K562 (cell line): ENCODE measurements at regions of chr5 and their contacts with region 1.

Region 1: DNA sequence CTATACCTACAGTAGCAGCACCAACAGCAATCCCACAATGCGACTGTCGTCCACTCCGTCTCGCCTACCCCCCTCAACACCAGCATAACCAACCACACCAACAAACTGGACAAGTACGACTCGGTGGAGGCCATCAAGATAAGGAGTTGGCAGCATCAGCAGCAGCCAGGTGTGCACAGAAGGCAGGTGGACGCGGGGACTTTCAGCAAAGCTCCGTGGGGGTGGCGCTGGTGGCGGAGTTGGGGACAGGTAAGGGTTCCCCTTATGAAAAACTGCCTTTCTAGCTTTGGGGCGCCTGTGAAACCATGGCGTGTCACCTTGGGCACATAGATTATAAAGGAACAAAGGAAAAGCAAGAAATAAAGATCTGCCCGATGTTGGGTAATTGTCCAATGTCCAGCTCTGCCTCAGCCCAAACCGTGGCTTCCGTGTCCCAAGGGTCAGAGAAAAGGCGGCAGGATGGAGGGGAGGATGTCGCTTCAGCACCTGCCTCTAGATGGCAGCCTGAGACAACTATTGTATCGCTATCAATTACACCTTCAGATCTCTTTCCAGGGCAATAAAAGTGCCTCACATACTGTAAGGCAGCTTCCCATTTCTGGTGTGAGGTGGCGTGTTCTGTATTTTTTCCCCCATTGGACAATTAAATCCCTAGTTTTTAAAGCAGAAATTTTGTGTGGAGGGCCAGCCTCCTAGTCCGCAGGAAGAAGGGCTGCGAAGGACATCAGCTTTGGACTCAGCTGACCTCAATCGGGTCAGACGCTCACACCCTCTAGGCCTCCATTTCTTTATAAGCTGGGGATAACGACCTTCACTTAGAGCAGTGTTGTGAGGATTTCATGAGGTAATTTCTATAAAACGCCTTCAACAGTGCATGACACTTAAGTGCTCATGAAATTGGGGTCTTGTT is 58.8 kb downstream of the MTRR start:
- DNase-seq: peak; percentile 76 to 77 (median 76)
- ATAC-seq: peak; percentile 97
- H3K4me3 ChIP-seq: no peak overlapping the region
- H3K27ac ChIP-seq: no peak overlapping the region
- H3K4me1 ChIP-seq: no peaks in the 10 kb centered on the region
- H3K27me3 ChIP-seq: peaks cover 0 to 4% of the 10 kb centered on the region in 2 experiments; a peak in 2 of 5 replicates
- CTCF ChIP-seq: peak; percentile 80 to 96 (median 94)
- EP300 ChIP-seq: no peak
- POLR2A ChIP-seq: no peak
- RAD21 ChIP-seq: peak; percentile 75 to 90

Region 2: GRCh38 chr5:7904170-7904569 is 23.6 kb before region 1 on chr5:
- CTCF ChIA-PET with region 1: no interaction called
- POLR2A ChIA-PET with region 1: no interaction called
- in situ Hi-C with region 1: no loop called
- intact Hi-C with region 1: no loop called
- DNase-seq: no peak
- ATAC-seq: peak; percentile 48; the same call in 2 of the 3 replicates
- H3K4me3 ChIP-seq: no peak overlapping the region
- H3K27ac ChIP-seq: no peak overlapping the region
- H3K4me1 ChIP-seq: no peaks in the 10 kb centered on the region
- H3K27me3 ChIP-seq: no peaks in the 10 kb centered on the region
- CTCF ChIP-seq: no peak
- EP300 ChIP-seq: no peak
- POLR2A ChIP-seq: no peak
- RAD21 ChIP-seq: no peak

Region 3: DNA sequence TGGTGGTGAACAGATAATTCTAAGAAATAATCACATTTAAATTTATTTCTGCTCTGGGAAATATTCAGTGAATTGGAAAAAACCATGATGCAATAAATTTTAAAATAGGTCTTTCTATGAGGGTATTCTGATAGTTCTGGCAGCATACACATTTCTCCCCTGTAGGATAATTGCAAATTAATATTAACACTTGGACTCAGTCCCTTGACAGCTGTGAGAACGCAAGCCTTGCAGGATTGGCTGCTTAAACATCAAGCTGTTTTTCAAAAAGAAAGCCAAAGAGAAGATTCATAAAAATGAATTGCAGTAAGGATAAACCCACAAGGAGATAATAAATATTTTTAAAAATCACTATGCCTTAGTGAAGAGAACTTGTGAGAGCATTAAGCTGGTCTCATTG is 121.2 kb after region 1 on chr5:
- CTCF ChIA-PET with region 1: no interaction called
- POLR2A ChIA-PET with region 1: no interaction called
- in situ Hi-C with region 1: no loop called
- intact Hi-C with region 1: loop called (anchors 5 kb)
- DNase-seq: no peak
- ATAC-seq: no peak
- H3K4me3 ChIP-seq: no peak overlapping the region
- H3K27ac ChIP-seq: no peak overlapping the region
- H3K4me1 ChIP-seq: peaks cover 0 to 3% of the 10 kb centered on the region in 2 experiments; a peak in 1 of 5 replicates
- H3K27me3 ChIP-seq: peaks cover 0 to 12% of the 10 kb centered on the region in 2 experiments; a peak in 3 of 5 replicates
- CTCF ChIP-seq: no peak
- EP300 ChIP-seq: no peak
- POLR2A ChIP-seq: no peak
- RAD21 ChIP-seq: no peak

Region 4: DNA sequence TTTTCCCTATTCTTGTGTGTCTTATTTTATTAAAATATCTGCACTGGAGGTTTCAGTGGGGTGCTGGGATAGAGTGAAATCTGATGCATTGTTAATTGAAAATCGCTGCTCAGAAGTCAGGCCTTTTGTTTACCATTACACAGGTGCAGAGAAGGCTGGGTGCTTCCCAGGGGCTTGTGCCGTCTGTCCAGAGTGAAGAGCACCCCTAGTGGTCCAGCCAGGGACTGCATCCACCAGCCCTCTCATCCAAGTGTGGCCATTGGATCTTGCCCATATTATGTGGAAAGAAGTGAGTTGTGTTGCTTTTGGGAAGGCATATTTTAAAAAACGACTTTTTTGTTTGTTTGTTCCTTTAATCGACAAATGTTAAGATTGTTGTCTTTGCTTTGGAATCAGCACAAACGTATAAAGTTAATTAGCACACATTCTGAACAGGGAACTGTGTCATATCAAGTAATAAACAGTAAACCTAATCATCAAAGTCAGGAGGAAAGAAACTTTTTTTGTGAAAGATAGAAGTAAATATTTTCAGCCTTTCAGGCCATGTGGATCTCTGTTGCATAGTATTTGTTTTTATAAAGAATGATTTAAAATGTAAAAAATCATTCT is 256.8 kb after region 1 on chr5:
- CTCF ChIA-PET with region 1: no interaction called
- POLR2A ChIA-PET with region 1: no interaction called
- in situ Hi-C with region 1: no loop called
- intact Hi-C with region 1: loop called (anchors 10 kb)
- DNase-seq: peak; percentile 59 to 76 (median 70)
- ATAC-seq: peak; percentile 98
- H3K4me3 ChIP-seq: no peak overlapping the region
- H3K27ac ChIP-seq: no peak overlapping the region
- H3K4me1 ChIP-seq: no peaks in the 10 kb centered on the region
- H3K27me3 ChIP-seq: no peaks in the 10 kb centered on the region
- CTCF ChIP-seq: peak; percentile 64 to 93 (median 80)
- EP300 ChIP-seq: no peak
- POLR2A ChIP-seq: no peak
- RAD21 ChIP-seq: peak in 1 of 2 experiments; percentile 35; a peak in 2 of 4 replicates

Region 5: GRCh38 chr5:9207817-9208418 is 1280.2 kb after region 1 on chr5:
- CTCF ChIA-PET with region 1: interaction called, 14 read pairs
- POLR2A ChIA-PET with region 1: no interaction called
- in situ Hi-C with region 1: loop called (anchors 10 kb)
- intact Hi-C with region 1: loop called (anchors 2 kb)
- DNase-seq: peak; percentile 18 to 68 (median 37)
- ATAC-seq: peak; percentile 89
- H3K4me3 ChIP-seq: no peak overlapping the region
- H3K27ac ChIP-seq: no peak overlapping the region
- H3K4me1 ChIP-seq: no peaks in the 10 kb centered on the region
- H3K27me3 ChIP-seq: no peaks in the 10 kb centered on the region
- CTCF ChIP-seq: peak; percentile 23 to 77 (median 25); a peak in 3 of 6 replicates
- EP300 ChIP-seq: no peak
- POLR2A ChIP-seq: no peak
- RAD21 ChIP-seq: peak; percentile 69 to 85

Region 6: GRCh38 chr5:9544502-9545135 is 1616.9 kb after region 1 on chr5:
- CTCF ChIA-PET with region 1: no interaction called
- POLR2A ChIA-PET with region 1: no interaction called
- in situ Hi-C with region 1: no loop called
- intact Hi-C with region 1: loop called (anchors 10 kb)
- DNase-seq: peak; percentile 65 to 77 (median 68)
- ATAC-seq: peak; percentile 88
- H3K4me3 ChIP-seq: no peak overlapping the region
- H3K27ac ChIP-seq: no peak overlapping the region
- H3K4me1 ChIP-seq: peaks cover 0 to 21% of the 10 kb centered on the region in 2 experiments; a peak in 2 of 5 replicates
- H3K27me3 ChIP-seq: peaks cover 0 to 4% of the 10 kb centered on the region in 2 experiments; a peak in 1 of 5 replicates
- CTCF ChIP-seq: peak; percentile 80 to 88 (median 85)
- EP300 ChIP-seq: no peak
- POLR2A ChIP-seq: no peak
- RAD21 ChIP-seq: peak; percentile 43 to 61; a peak in 3 of 4 replicates